IMR-90 (cell line): ENCODE measurements at regions of chr12 and their contacts with region 1.

Region 1: DNA sequence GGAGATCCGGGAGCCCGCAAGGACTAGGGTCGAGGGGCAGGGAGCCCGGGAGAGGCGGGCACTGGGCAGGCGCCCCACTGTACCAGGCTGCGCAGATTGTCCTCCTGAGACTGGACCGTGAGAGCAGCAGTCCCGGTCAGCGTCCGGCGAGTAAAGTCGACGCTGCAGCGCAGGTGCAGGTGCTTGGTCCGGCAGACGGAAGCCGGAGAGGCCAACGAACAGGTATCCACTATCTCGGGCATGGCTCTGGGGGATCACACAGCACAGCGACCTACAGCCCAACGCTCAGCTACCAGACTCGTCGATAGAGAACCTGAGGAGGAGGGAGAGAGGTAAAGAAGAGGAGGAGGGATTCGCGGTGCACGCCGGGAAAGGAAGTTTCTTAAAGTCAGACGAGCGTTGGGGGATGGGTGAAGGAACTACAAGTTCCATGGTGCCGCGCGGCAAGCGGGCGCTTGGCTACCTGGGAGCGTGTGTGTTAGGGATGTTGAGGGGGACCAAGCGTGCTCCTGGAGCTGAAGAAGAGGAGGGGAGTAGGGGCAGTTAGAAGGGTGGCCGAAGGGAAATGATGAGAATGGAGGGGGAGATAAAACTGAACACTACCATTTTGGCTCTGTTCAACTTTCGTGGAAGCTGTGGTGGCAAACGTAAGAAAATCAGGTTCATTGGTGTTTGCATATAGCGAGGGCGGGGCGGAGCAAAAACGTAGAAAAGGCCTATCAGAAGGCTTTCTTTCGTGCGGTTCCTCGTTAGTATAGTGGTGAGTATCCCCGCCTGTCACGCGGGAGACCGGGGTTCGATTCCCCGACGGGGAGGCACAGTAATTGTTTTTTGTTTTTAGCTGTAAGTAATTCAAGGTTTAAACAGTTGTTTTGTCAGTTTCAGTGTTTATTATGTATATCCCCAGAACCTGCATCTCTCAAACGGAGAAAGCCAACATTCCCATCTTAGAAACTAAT is at the start of gene LTA4H:
- DNase-seq: peak; percentile 98
- ATAC-seq: peak; percentile 96
- H3K4me3 ChIP-seq: peak within 1 kb of the TSS; percentile 87
- H3K27ac ChIP-seq: peak within 1 kb of the TSS; percentile 54
- H3K4me1 ChIP-seq: 0 out of 2 replicates have a peak, but pooled peaks cover 2% of the 10 kb centered on the region
- H3K27me3 ChIP-seq: no peaks in the 10 kb centered on the region
- CTCF ChIP-seq: no peak
- POLR2A ChIP-seq: peak; percentile 66; the same call in 1 of the 2 replicates
- RAD21 ChIP-seq: no peak
- total RNA-seq, gene LTA4H: 41.0 and 76.7 TPM in 2 replicates

Region 2: GRCh38 chr12:95506707-95507523 is 528.6 kb before region 1 on chr12:
- CTCF ChIA-PET with region 1: no interaction called
- POLR2A ChIA-PET with region 1: interaction called, 13 read pairs
- dilution Hi-C with region 1: no loop called
- in situ Hi-C with region 1: no loop called
- intact Hi-C with region 1: no loop called
- DNase-seq: peak; percentile 7
- ATAC-seq: no peak
- H3K4me3 ChIP-seq: no peak overlapping the region
- H3K27ac ChIP-seq: no peak overlapping the region
- H3K4me1 ChIP-seq: peaks cover 2% of the 10 kb centered on the region
- H3K27me3 ChIP-seq: no peaks in the 10 kb centered on the region
- CTCF ChIP-seq: no peak
- POLR2A ChIP-seq: no peak
- RAD21 ChIP-seq: no peak

Region 3: DNA sequence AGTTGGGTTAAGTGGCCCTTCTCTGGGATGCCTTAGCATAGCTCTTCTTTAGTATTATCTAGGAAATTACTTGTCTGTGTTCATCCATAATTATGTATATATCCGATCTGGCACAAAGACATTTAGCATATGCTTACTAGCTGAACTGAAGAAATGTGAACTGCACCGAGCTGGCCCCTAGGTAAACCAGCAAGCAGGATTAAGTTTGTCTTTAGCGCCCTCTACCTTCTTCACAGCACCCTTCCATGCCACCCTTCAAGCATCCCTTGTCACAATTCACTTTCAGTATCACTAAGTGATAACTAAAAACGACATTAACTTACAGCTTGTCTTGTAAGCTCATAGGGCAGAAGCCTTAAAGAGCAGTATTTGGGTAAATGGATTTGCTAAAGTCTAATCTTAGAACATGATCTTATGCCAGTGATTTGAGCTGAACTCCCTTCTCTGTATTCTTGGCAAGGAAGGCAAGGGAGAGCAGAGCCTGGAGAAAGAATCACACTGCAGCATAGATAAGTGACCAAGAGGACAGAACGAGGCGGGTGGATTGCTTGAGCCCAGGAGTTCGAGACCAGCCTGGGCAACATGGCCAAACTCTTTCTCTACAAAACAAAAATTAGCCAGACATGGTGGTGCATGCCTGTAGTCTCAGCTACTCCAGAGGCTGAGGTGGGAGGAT is 36.8 kb before region 1 on chr12:
- CTCF ChIA-PET with region 1: no interaction called
- POLR2A ChIA-PET with region 1: no interaction called
- dilution Hi-C with region 1: no loop called
- in situ Hi-C with region 1: no loop called
- intact Hi-C with region 1: no loop called
- DNase-seq: peak; percentile 61
- ATAC-seq: peak; percentile 94
- H3K4me3 ChIP-seq: no peak overlapping the region
- H3K27ac ChIP-seq: no peak overlapping the region
- H3K4me1 ChIP-seq: no peaks in the 10 kb centered on the region
- H3K27me3 ChIP-seq: no peaks in the 10 kb centered on the region
- CTCF ChIP-seq: peak; percentile 63
- POLR2A ChIP-seq: no peak
- RAD21 ChIP-seq: peak; percentile 65

Region 4: DNA sequence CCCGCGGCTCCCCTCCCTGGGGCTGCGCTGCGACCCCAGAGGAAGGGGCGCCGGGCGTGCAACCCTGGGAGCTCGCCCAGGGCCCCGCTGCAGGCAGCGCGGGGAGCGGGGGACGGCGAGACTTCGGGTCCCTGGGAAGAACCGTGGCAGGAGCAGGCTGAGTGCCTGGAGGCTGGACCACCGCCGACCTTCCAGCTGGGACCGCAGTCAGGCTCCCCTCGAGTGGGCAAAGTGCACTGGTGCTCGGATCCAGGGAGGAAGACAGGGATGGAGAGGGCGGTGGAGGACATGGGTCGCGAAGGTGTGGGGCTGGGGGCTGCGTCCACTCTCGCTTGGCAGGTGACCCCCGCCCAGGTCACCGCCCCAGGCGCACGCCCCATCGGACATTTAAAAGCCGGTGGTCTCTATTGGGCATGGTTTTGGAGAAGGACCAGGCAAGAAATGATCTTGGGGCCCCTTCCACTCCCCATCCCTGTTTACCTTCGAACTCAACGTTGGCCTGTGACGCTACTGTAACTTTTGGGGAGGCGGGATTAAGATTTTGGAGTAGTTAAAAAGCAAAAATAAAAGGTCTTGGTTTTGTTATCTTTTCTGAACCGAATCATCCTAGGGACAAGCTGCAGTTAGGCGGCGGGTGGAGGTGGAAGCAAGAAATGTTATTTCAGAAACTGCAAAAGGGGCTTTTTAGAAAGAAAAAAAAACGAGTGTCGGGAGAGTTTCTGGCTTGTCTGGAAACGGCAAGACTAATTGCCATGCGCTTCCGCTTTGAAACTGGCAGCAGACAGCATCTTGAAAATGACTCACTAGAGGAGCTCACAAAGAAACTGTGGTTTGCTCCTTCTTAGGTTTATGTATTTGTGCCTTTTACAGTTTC is 159.7 kb after region 1 on chr12:
- CTCF ChIA-PET with region 1: no interaction called
- POLR2A ChIA-PET with region 1: no interaction called
- dilution Hi-C with region 1: no loop called
- in situ Hi-C with region 1: no loop called
- intact Hi-C with region 1: loop called (anchors 5 kb)
- DNase-seq: peak; percentile 91
- ATAC-seq: peak; percentile 8
- H3K4me3 ChIP-seq: peak overlapping the region; percentile 97
- H3K27ac ChIP-seq: peak overlapping the region; percentile 92
- H3K4me1 ChIP-seq: peaks cover 5% of the 10 kb centered on the region
- H3K27me3 ChIP-seq: no peaks in the 10 kb centered on the region
- CTCF ChIP-seq: no peak
- POLR2A ChIP-seq: peak; percentile 75
- RAD21 ChIP-seq: no peak

Region 5: GRCh38 chr12:96456265-96456974 is 420.9 kb after region 1 on chr12:
- CTCF ChIA-PET with region 1: no interaction called
- POLR2A ChIA-PET with region 1: no interaction called
- dilution Hi-C with region 1: no loop called
- in situ Hi-C with region 1: no loop called
- intact Hi-C with region 1: no loop called
- DNase-seq: no peak
- ATAC-seq: no peak
- H3K4me3 ChIP-seq: no peak overlapping the region
- H3K27ac ChIP-seq: no peak overlapping the region
- H3K4me1 ChIP-seq: no peaks in the 10 kb centered on the region
- H3K27me3 ChIP-seq: no peaks in the 10 kb centered on the region
- CTCF ChIP-seq: no peak
- POLR2A ChIP-seq: no peak
- RAD21 ChIP-seq: no peak